CD4-positive, alpha-beta memory T cell (primary cell): ENCODE measurements at regions of chr12 and their contacts with region 1.

Region 1: DNA sequence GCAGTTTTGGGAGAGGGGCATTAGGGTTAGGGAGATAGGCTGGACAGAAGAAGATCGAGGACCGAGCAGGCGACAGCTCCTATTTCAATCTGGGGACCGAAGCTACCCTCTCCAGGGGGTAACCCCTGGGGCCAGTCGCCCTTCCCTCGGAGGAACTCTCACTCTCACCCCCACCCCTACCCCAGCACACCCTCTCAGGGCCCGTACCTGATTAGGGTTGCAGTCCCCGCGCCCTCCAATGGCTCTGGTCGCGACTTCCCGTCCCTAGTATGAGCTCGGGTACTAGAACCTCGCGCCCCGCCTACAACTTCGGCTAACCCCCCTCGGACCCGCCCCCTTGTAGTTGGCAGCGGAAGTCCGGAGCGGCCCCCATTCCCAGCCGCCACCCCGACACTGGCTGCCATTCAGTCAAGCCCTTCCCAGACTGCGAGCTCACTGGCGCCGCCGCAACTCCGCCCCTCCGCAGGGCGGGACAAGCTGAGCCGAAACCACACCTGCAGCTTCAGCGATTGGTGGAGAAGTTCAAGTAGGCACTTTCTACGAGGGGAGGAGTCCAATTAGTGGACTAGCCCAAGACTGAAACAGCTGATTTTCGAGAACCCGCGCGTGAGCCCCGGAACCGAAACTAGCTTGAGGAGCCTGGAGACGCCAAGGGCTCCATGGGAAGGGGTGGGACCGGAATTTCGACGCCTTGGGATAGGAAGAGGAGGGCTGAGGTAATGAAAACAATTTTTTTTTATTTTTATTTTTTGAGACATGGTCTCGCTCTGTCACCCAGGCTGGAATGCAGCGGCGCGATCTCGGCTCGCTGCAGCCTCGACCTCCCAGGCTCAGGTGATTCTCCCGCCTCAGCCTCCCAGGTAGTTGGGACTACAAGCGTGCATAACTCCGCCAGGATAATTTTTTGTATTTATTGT is at the start of gene STAT2:
- DNase-seq: peak; percentile 99 to 100 (median 100)
- H3K4me3 ChIP-seq: peak within 1 kb of the TSS; percentile 78 to 97
- H3K4me3 Mint-ChIP-seq: peak within 1 kb of the TSS; percentile 92 to 98 (median 96)
- H3K27ac ChIP-seq: peak within 1 kb of the TSS; percentile 84
- H3K27ac Mint-ChIP-seq: peak within 1 kb of the TSS; percentile 89 to 98 (median 96)
- H3K4me1 ChIP-seq: peaks cover 29% of the 10 kb centered on the region
- H3K4me1 Mint-ChIP-seq: peaks cover 16 to 30% (median 21%) of the 10 kb centered on the region in 4 donors
- H3K27me3 ChIP-seq: no peaks in the 10 kb centered on the region
- H3K27me3 Mint-ChIP-seq: no peaks in the 10 kb centered on the region
- total RNA-seq, gene STAT2: 192 to 193 TPM

Region 2: DNA sequence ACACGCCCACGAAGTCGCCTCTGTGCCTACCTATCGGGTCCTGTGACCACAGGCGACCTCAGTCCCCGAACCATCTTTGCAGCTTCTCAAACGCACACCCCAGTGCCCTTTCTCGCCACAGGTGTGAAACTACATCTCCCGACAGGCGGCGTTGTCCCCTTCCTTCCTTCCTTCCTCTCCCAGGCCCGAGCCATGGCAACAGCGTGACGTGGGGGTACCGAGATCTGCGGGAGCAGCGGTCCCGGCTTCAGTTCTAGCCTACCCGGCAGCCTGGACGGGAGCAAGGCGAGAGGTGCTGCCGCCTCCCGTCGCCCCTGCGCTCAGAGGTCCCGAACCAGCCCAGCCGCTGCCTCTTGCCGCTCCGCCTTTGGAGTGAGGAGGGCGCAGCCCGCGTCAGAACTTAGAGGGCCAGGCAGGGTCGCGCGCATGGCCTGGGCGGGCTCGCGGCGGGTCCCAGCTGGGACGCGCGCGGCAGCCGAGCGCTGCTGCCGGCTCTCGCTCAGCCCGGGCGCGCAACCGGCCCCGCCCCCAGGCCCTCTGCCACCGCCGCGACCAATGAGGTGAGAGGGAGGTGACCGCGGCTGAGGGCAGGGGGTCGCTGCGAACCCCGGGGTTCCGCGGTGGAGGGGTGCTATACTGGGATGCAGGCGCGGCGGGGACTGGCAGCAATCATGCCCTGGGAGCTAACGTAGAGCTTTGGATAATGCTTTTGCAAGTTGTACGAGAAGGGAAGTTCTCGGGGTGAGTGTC is 93.2 kb before region 1 on chr12 and contains the start of gene COQ10A:
- CTCF ChIA-PET with region 1: no interaction called
- POLR2A ChIA-PET with region 1: interaction called, 4 read pairs
- intact Hi-C with region 1: loop called (anchors 5 kb)
- DNase-seq: peak; percentile 89 to 96 (median 91)
- H3K4me3 ChIP-seq: peak within 1 kb of the TSS; percentile 27 to 90
- H3K4me3 Mint-ChIP-seq: peak within 1 kb of the TSS; percentile 89 to 99 (median 96)
- H3K27ac ChIP-seq: peak within 1 kb of the TSS; percentile 84
- H3K27ac Mint-ChIP-seq: peak within 1 kb of the TSS; percentile 90 to 99 (median 97)
- H3K4me1 ChIP-seq: peaks cover 14% of the 10 kb centered on the region
- H3K4me1 Mint-ChIP-seq: peaks cover 10 to 23% (median 16%) of the 10 kb centered on the region in 4 donors
- H3K27me3 ChIP-seq: no peaks in the 10 kb centered on the region
- H3K27me3 Mint-ChIP-seq: no peaks in the 10 kb centered on the region
- total RNA-seq, gene COQ10A: 35.3 to 38.6 TPM

Region 3: DNA sequence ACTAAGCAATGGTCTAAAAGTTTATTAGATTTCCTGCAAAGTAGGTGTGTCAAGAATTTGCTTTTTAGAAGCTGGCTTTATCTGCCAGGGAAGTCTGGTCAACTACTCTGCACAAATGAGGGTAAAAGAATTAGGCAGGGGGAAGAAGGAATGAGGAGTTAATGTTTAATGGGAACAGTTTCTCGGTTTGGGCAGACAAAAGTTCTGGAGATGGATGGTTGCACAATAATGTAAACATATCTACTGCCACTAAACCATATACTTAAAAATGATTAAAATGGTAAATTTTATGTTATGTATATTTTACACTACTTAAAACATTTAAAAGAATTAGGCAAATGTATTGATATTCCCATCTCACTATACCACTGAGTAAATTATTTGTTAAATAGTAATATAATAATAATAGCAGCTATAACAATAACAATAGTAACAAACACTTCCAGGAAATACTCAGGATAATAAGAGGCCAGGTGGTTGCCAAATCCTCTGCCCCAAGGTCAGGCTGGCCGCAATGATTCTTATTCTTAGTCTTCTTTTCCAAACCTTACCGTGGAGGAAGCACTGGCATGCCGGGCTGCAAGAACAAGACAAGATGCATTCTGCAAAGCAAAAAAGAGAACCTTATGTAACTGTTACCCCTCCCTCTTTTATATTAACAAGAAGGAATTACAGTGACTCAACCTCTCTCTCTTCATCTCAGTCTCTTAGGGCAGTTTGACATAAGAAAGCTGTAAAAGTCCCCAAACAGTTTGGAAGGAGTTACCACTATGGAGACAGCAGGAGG is 73.9 kb before region 1 on chr12:
- CTCF ChIA-PET with region 1: no interaction called
- POLR2A ChIA-PET with region 1: no interaction called
- intact Hi-C with region 1: no loop called
- DNase-seq: no peak
- H3K4me3 ChIP-seq: no peak overlapping the region
- H3K4me3 Mint-ChIP-seq: no peak overlapping the region
- H3K27ac ChIP-seq: no peak overlapping the region
- H3K27ac Mint-ChIP-seq: peak overlapping the region in 6 of 7 donors; percentile 32 to 79 (median 60)
- H3K4me1 ChIP-seq: peaks cover 6% of the 10 kb centered on the region
- H3K4me1 Mint-ChIP-seq: peaks cover 6 to 18% (median 10%) of the 10 kb centered on the region in 4 donors
- H3K27me3 ChIP-seq: no peaks in the 10 kb centered on the region
- H3K27me3 Mint-ChIP-seq: no peaks in the 10 kb centered on the region

Region 4: DNA sequence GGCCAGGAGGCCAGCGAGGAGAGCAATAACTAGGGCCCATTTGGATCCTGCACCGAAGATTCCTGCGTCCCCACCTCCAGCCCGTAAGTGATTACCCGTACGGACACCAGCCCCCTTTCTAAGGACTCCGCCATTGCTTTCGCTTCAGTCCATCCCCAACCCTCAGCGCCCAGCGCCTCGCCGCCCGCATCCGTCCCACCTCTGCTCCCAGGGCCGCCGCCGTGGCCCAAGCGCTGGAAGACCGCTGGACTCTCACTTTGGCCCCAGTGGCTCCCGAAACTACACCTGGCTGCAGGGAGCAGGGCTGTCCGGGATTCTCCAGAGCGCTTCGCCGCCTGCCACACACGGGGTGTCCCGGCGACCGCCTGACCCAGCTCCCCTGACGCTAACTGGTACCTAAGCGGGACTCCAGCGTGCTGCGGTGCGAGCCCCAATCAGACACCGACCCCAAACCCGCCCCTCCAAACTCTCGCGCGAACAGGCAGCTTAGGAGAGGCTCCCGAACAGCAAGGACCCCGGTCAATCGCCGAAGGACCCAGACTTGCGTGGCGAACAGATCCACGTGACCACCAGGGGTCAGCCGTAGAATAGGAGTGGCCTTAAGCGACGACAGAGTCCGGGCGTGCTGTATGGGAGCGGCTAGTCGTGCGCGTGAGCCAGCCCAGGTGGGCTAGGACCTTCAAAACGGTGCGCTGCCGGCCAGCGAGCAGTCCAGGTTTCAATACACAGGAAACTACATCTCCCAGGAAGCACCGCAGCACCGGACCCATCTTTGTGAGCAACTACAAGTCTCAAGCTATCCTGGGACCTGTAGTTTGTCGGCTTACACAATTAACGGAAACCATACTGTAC is 44.3 kb before region 1 on chr12 and contains the start of gene CNPY2:
- CTCF ChIA-PET with region 1: interaction called, 10 read pairs
- POLR2A ChIA-PET with region 1: interaction called, 59 read pairs
- intact Hi-C with region 1: loop called (anchors 1 kb)
- DNase-seq: peak; percentile 93 to 97 (median 95)
- H3K4me3 ChIP-seq: peak within 1 kb of the TSS; percentile 99 to 100
- H3K4me3 Mint-ChIP-seq: peak within 1 kb of the TSS; percentile 97 to 100 (median 98)
- H3K27ac ChIP-seq: peak within 1 kb of the TSS; percentile 95
- H3K27ac Mint-ChIP-seq: peak within 1 kb of the TSS; percentile 98 to 100 (median 99)
- H3K4me1 ChIP-seq: peaks cover 18% of the 10 kb centered on the region
- H3K4me1 Mint-ChIP-seq: peaks cover 1 to 25% (median 13%) of the 10 kb centered on the region in 4 donors
- H3K27me3 ChIP-seq: no peaks in the 10 kb centered on the region
- H3K27me3 Mint-ChIP-seq: no peaks in the 10 kb centered on the region
- total RNA-seq, gene CNPY2: 93.5 to 95.8 TPM

Region 5: GRCh38 chr12:56346703-56347102 is 13.4 kb before region 1 on chr12:
- CTCF ChIA-PET with region 1: interaction called, 8 read pairs
- POLR2A ChIA-PET with region 1: interaction called, 264 read pairs
- intact Hi-C with region 1: no loop called
- DNase-seq: peak in 1 of 5 donors; percentile 18
- H3K4me3 ChIP-seq: no peak overlapping the region
- H3K4me3 Mint-ChIP-seq: no peak overlapping the region
- H3K27ac ChIP-seq: no peak overlapping the region
- H3K27ac Mint-ChIP-seq: peak overlapping the region in 4 of 7 donors; percentile 30 to 79 (median 49)
- H3K4me1 ChIP-seq: no peaks in the 10 kb centered on the region
- H3K4me1 Mint-ChIP-seq: peaks cover 0 to 5% (median 2%) of the 10 kb centered on the region in 4 donors
- H3K27me3 ChIP-seq: no peaks in the 10 kb centered on the region
- H3K27me3 Mint-ChIP-seq: no peaks in the 10 kb centered on the region